HepG2 (cell line): ENCODE measurements at regions of chr10 and their contacts with region 1.

Region 1: DNA sequence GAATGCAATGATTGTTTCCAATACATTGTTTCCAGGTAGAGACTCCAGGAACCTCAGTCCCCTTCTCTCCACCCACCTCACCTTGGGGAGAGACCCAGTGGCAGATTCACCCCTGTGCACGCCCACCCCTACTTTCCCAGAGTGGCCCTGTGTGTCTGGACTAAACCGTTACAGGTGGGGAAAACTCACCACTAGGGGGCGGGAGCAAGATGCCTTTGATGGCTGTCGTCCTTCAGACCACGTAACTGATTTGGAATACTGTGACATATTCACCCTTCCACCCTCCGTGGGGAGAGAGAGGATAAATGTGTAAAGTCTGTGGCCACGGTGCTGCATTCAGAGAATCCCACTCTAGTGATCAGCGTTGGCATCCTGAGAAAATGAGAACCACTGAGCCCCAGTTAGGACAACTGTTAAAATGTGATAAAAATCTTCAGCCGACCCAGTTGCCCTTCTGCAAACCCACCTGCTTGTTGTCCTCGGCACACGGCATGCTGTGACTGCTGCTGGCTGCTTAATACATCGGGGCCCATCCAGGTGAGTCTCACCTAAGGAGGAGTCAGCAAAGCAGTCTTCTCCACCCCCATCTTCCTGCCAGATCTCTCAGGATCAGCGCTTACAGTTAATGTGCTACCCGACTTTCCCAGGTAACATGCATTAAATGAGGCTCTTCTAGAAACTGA is 41.5 kb upstream of the NMT2 start:
- DNase-seq: peak; percentile 69
- ATAC-seq: peak; percentile 95
- H3K4me3 ChIP-seq: no peak overlapping the region
- H3K27ac ChIP-seq: no peak overlapping the region
- H3K4me1 ChIP-seq: no peaks in the 10 kb centered on the region
- H3K27me3 ChIP-seq: no peaks in the 10 kb centered on the region
- CTCF ChIP-seq: peak; percentile 93
- EP300 ChIP-seq: no peak
- POLR2A ChIP-seq: no peak
- RAD21 ChIP-seq: peak; percentile 62; the same call in 1 of the 2 replicates

Region 2: GRCh38 chr10:15419279-15419874 is 209.4 kb after region 1 on chr10:
- CTCF ChIA-PET with region 1: interaction called, 5 read pairs
- POLR2A ChIA-PET with region 1: no interaction called
- in situ Hi-C with region 1: no loop called
- intact Hi-C with region 1: loop called (anchors 1 kb)
- DNase-seq: peak; percentile 29
- ATAC-seq: peak; percentile 63
- H3K4me3 ChIP-seq: no peak overlapping the region
- H3K27ac ChIP-seq: no peak overlapping the region
- H3K4me1 ChIP-seq: no peaks in the 10 kb centered on the region
- H3K27me3 ChIP-seq: no peaks in the 10 kb centered on the region; a peak in 1 of 5 replicates
- CTCF ChIP-seq: peak; percentile 56
- EP300 ChIP-seq: no peak
- POLR2A ChIP-seq: no peak
- RAD21 ChIP-seq: no peak

Region 3: DNA sequence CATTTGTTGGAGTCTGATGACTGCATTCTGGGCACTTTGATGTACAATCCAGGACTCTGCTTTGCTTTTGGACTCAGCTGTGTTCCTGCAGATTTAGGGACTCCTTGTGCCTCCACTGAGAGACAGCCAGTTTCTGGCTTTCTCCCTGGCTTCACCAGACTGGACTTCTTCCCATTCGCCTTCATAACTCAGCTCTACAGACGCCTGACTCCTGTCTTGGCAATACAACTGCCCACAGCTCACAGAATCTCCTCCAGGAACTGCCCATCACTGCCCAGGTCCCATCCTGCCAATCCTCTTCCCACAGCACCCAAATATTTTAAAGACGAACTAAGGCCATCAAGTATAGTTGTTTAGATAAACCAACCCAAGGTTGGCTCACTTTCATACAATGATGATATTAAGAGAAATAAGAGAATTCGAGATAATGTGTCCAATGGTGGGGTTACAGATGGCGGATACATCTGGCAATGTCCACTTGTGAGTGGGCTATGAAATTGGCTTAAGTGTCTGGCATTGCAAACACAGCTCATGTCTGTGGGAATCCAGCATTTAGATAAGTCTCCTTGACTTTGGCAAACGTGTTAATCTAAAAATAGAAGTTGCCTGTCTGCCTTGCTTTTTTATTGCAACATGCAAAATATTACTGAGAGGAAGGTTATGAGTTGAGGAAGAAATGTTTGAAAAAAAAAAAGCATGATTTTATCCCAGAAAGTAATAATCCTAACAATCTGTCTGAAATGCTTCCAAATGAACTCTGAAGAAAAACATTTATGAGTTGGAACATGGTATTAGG is 414.6 kb after region 1 on chr10:
- CTCF ChIA-PET with region 1: no interaction called
- POLR2A ChIA-PET with region 1: no interaction called
- in situ Hi-C with region 1: no loop called
- intact Hi-C with region 1: no loop called
- DNase-seq: no peak
- ATAC-seq: no peak
- H3K4me3 ChIP-seq: no peak overlapping the region
- H3K27ac ChIP-seq: no peak overlapping the region
- H3K4me1 ChIP-seq: no peaks in the 10 kb centered on the region
- H3K27me3 ChIP-seq: no peaks in the 10 kb centered on the region; a peak in 2 of 5 replicates
- CTCF ChIP-seq: no peak
- EP300 ChIP-seq: no peak
- POLR2A ChIP-seq: no peak
- RAD21 ChIP-seq: no peak